Posterior cingulate gyrus (tissue), 11 donors: ENCODE measurements at regions of chr1 and their contacts with region 1.

Region 1: GRCh38 chr1:165630629-165631341 is at the start of gene MGST3:
- DNase-seq: peak; percentile 80 to 98 (median 90)

Region 2: DNA sequence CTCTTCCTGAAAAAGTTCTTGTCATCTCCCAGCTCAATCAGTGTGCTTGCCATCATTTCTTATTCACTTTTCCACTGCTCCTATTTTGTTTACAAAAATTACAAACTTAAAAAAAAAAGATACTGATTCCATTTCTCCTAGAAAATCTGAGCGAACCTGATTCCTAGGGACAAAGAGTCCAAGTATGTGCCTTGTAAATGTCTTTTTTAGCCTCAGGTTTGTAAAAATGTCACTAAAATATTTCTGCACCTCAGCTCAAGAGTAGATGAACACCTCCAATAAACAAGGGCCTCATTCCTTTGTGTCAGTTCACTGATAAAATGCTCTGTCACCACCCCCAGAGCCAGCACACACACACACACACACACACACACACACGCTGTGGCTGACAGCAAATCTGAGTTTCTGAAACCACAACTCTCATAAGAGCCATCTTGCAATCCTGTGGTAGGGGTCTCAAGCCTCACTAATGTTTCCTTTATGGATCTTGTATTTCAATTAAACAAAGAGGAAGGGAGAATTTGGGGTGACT is 772.6 kb before region 1 on chr1:
- intact Hi-C with region 1: no loop called
- DNase-seq: no peak

Region 3: GRCh38 chr1:165679282-165680036 is 48.7 kb after region 1 on chr1:
- intact Hi-C with region 1: no loop called
- DNase-seq: no peak

Region 4: GRCh38 chr1:165697881-165698760 is 67.3 kb after region 1 on chr1 and contains the start of gene ALDH9A1:
- intact Hi-C with region 1: loop called (anchors 2 kb)
- DNase-seq: peak; percentile 76 to 98 (median 88)

Region 5: DNA sequence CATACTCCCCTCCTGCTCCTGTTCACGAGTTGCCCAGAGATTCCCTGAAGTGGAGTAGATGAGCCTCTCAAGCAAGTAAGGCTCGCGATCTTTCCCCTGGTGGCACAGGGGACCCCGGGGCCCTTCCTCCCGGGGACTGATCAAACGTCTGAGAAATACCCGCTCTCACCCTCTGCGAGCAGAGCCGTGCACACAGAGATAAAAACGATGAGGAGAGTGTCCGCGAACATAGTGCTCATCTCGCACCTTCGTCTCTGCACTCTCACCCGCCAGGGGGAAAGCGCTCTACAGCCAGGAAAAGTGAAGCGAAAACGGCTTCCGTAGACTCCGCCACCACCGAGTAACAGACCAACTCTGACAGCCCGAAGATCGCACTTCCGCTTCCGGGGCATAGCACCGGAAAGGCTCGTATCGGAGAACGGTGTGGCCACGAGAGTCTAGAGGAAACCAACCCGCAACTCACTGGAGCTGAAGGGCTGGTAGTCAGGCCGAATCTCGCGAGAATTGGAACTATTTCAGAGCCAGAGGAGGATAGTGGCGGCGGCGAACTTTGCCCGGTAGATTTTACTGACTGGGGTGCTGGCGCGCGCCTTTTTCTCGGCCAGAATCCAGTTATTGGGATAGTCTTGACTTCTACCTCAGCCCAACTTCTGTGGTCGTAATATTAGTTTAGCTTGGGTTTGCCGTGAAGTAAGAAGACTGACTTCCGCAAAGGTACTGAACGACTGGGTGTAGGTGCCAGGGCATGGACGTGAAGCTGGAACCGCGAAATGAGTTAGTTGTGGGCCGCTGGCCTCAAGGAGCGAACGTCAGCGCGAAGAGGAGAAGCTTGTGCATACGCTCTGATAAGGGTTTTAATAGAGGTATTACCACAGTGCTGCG is 138.0 kb after region 1 on chr1 and contains the start of gene TMCO1:
- intact Hi-C with region 1: loop called (anchors 10 kb)
- DNase-seq: peak; percentile 93 to 100 (median 98)

Region 6: GRCh38 chr1:165827268-165828102 is 196.7 kb after region 1 on chr1 and contains the start of gene UCK2:
- intact Hi-C with region 1: loop called (anchors 5 kb)
- DNase-seq: peak; percentile 58 to 95 (median 74)